CD4-positive, alpha-beta T cell (primary cell): ENCODE measurements at regions of chr10 and their contacts with region 1.

Region 1: DNA sequence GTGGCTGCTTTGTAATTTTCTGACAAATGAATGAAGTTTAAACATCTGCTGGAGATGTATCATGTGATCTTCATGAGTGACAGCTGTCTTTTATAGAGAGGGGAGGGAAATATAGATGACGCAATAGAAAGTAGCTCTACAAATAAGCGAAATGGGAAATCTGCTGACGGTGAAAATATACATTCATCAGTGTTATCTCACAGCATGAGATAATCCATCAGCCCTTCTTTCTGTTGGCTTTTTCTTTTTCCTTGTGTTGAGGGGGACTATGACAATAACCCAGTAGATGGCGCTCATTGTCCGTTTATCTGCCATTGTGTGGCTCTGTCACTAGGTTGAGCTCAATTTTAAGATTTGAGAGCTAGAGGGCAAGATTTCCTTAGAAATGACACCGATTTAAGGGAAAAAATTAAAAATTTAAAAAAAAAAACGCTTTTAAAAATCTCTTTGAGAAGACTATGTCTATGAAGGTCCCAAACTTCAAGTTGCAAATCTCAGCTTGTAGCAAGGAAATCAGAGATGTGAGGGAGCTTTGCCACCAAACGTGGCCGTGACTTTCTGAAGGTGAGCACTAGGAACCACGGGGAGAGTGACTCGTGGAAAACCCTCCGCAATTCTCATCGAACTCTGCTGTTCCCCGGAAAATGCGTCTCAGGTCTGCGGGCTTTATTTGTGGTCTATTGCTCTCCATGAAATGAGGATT is 114.6 kb upstream of the SFMBT2 start:
- DNase-seq: peak in 13 of 14 experiments; percentile 31 to 86 (median 48)
- ATAC-seq: peak; percentile 91
- H3K4me3 ChIP-seq: no peak overlapping the region
- H3K4me3 Mint-ChIP-seq: no peak overlapping the region
- H3K27ac ChIP-seq: no peak overlapping the region
- H3K27ac Mint-ChIP-seq: no peak overlapping the region
- H3K4me1 ChIP-seq: peaks cover 4% of the 10 kb centered on the region
- H3K4me1 Mint-ChIP-seq: peaks cover 29% of the 10 kb centered on the region
- H3K27me3 ChIP-seq: no peaks in the 10 kb centered on the region
- H3K27me3 Mint-ChIP-seq: no peaks in the 10 kb centered on the region
- CTCF ChIP-seq: peak; percentile 76

Region 2: GRCh38 chr10:7484456-7485243 is 40.8 kb before region 1 on chr10:
- CTCF ChIA-PET with region 1: interaction called, 7 read pairs
- POLR2A ChIA-PET with region 1: interaction called, 8 read pairs
- intact Hi-C with region 1: loop called in 1 of 2 experiments (anchors 5 kb)
- DNase-seq: peak; percentile 38 to 88 (median 62)
- ATAC-seq: peak; percentile 83
- H3K4me3 ChIP-seq: peak overlapping the region; percentile 46
- H3K4me3 Mint-ChIP-seq: peak overlapping the region; percentile 83
- H3K27ac ChIP-seq: peak overlapping the region; percentile 62 to 80
- H3K27ac Mint-ChIP-seq: peak overlapping the region; percentile 95
- H3K4me1 ChIP-seq: peaks cover 72% of the 10 kb centered on the region
- H3K4me1 Mint-ChIP-seq: peaks cover 90% of the 10 kb centered on the region
- H3K27me3 ChIP-seq: no peaks in the 10 kb centered on the region
- H3K27me3 Mint-ChIP-seq: no peaks in the 10 kb centered on the region
- CTCF ChIP-seq: no peak

Region 3: GRCh38 chr10:7551950-7552716 is 26.7 kb after region 1 on chr10:
- CTCF ChIA-PET with region 1: no interaction called
- POLR2A ChIA-PET with region 1: no interaction called
- intact Hi-C with region 1: no loop called
- DNase-seq: no peak
- ATAC-seq: no peak
- H3K4me3 ChIP-seq: no peak overlapping the region
- H3K4me3 Mint-ChIP-seq: no peak overlapping the region
- H3K27ac ChIP-seq: no peak overlapping the region
- H3K27ac Mint-ChIP-seq: no peak overlapping the region
- H3K4me1 ChIP-seq: no peaks in the 10 kb centered on the region
- H3K4me1 Mint-ChIP-seq: no peaks in the 10 kb centered on the region
- H3K27me3 ChIP-seq: peaks cover 0 to under 1% of the 10 kb centered on the region in 2 experiments
- H3K27me3 Mint-ChIP-seq: no peaks in the 10 kb centered on the region
- CTCF ChIP-seq: no peak

Region 4: GRCh38 chr10:7572391-7572790 is 46.9 kb after region 1 on chr10:
- CTCF ChIA-PET with region 1: no interaction called
- POLR2A ChIA-PET with region 1: no interaction called
- intact Hi-C with region 1: no loop called
- DNase-seq: no peak
- ATAC-seq: no peak
- H3K4me3 ChIP-seq: no peak overlapping the region
- H3K4me3 Mint-ChIP-seq: no peak overlapping the region
- H3K27ac ChIP-seq: no peak overlapping the region
- H3K27ac Mint-ChIP-seq: no peak overlapping the region
- H3K4me1 ChIP-seq: no peaks in the 10 kb centered on the region
- H3K4me1 Mint-ChIP-seq: no peaks in the 10 kb centered on the region
- H3K27me3 ChIP-seq: no peaks in the 10 kb centered on the region
- H3K27me3 Mint-ChIP-seq: no peaks in the 10 kb centered on the region
- CTCF ChIP-seq: no peak

Region 5: DNA sequence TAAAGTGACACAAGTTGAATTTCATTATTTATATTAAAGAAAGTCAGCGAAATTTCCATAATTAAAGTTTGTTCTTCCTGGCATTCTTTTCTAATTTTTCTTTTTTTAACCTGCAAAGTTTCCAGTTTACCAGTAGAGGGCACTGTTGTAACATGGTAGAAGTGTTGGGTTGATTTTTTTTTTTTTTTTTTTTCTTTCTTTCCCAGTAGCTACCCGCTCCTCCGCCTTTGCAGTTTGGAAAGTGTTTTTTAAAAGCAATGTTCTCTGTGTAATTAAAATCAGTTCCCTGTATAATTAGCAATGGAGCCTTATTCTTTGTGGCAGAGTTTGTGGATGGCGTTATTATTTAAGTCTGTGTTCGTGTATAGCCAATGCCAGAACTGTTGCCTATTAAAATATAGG is 346.6 kb after region 1 on chr10:
- CTCF ChIA-PET with region 1: no interaction called
- POLR2A ChIA-PET with region 1: no interaction called
- intact Hi-C with region 1: loop called in 1 of 2 experiments (anchors 2 kb)
- DNase-seq: peak in 3 of 14 experiments; percentile 39 to 56 (median 50)
- ATAC-seq: no peak
- H3K4me3 ChIP-seq: no peak overlapping the region
- H3K4me3 Mint-ChIP-seq: peak overlapping the region; percentile 69
- H3K27ac ChIP-seq: no peak overlapping the region
- H3K27ac Mint-ChIP-seq: no peak overlapping the region
- H3K4me1 ChIP-seq: no peaks in the 10 kb centered on the region
- H3K4me1 Mint-ChIP-seq: peaks cover 25% of the 10 kb centered on the region
- H3K27me3 ChIP-seq: no peaks in the 10 kb centered on the region
- H3K27me3 Mint-ChIP-seq: no peaks in the 10 kb centered on the region
- CTCF ChIP-seq: peak; percentile 88

Region 6: DNA sequence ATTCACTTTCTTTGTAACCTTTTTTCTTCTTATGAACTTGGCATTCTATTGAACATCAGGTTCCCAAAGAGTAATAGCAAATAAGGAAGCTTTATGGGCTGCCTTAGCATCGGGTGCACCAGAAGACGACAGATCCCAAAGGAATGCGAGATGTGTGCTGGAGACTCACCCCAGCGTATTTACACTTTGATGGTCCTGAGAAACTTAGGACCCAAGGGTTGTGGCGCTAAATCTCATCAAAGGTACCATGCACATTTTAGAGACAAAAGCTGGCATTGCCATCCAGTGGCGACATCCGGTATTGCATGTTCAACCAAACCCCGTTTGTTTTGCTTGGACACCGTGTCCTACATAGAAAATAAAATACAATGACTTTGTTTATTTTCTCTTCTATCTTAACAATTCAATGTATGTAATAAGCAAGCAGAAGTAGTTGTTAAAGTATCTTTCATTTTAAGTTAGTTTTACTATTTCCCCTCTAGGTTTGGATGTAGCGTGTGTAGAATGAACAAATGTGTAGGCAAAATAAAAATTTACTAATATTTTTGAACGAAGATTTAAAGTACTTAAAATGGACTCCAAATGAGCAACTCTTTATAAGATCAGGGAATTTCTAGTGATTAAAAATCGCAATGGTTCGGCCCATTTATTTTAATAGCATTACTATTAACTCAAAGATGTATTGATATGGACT is 1683.8 kb after region 1 on chr10:
- CTCF ChIA-PET with region 1: interaction called, 5 read pairs
- POLR2A ChIA-PET with region 1: no interaction called
- intact Hi-C with region 1: loop called (anchors 1 to 5 kb)
- DNase-seq: peak; percentile 51 to 81 (median 69)
- ATAC-seq: peak; percentile 49
- H3K4me3 ChIP-seq: no peak overlapping the region
- H3K4me3 Mint-ChIP-seq: no peak overlapping the region
- H3K27ac ChIP-seq: no peak overlapping the region
- H3K27ac Mint-ChIP-seq: no peak overlapping the region
- H3K4me1 ChIP-seq: peaks cover 3% of the 10 kb centered on the region
- H3K4me1 Mint-ChIP-seq: peaks cover 8% of the 10 kb centered on the region
- H3K27me3 ChIP-seq: peaks cover 0 to 5% of the 10 kb centered on the region in 2 experiments
- H3K27me3 Mint-ChIP-seq: peaks cover 15% of the 10 kb centered on the region
- CTCF ChIP-seq: peak; percentile 98